ENCODE measurements at regions of chr19 and their contacts with region 1.

Region 1: GRCh38 chr19:4633140-4633967 is 6.0 kb upstream of the TNFAIP8L1 start:
- DNase-seq: peak; percentile 79
- H3K4me3 ChIP-seq: no peak overlapping the region
- H3K27ac ChIP-seq: peak overlapping the region; percentile 73
- H3K4me1 ChIP-seq: peaks cover 29% of the 10 kb centered on the region
- H3K27me3 ChIP-seq: no peaks in the 10 kb centered on the region
- CTCF ChIP-seq: peak; percentile 88 to 95
- POLR2A ChIP-seq: no peak

Region 2: DNA sequence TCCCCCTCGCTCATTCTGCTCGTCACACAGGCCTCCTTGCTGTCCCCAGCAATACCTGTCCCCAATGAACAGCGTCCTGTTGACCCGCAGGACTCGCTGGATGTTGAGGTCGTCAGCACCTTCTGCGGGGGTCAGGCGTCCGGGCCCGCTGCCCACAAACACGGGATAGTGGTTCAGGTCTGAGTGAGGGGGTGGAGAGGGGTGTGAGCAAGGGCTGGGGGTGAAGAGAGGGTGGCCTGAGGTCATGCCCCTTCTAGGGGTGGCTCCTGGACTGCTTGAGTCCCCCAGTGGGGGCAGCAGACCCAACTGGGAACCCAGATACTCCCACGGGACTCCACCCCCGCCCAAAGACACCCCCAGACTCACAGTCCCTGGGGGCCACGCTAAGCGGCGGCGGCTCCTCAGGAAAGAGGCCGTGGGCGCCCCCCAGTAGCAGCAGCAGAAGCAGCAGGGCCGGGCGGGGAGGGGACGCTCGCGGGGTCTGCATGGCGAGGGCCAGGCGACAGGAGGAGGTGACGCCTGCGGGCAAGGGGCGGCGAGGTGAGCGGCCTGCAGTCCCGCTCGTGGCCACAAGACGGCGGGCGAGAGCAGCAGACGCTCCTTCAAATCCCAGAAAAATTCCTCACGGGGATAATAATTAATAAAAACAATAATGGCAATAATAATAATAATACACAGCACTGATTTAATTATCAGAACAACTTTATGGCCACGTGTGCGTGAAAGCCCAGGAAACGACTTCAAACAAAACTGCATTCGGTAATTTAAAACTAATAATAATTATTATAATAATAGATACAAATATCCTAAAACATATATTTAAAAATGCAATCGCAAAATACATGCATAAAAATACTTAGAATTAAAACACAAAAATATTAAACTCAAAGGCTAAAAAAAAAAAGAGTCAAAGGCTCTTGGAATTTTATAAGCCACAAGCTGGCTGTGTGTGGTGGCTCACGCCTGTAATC is 75.1 kb before region 1 on chr19:
- CTCF ChIA-PET with region 1: interaction called, 42 read pairs
- POLR2A ChIA-PET with region 1: no interaction called
- dilution Hi-C with region 1: no loop called
- intact Hi-C with region 1: loop called (anchors 1 kb)
- DNase-seq: peak; percentile 61
- H3K4me3 ChIP-seq: peak overlapping the region in 2 of 3 experiments; percentile 37 to 76
- H3K27ac ChIP-seq: peak overlapping the region; percentile 77
- H3K4me1 ChIP-seq: peaks cover 26% of the 10 kb centered on the region
- H3K27me3 ChIP-seq: no peaks in the 10 kb centered on the region
- CTCF ChIP-seq: peak; percentile 91 to 93
- POLR2A ChIP-seq: no peak

Region 3: DNA sequence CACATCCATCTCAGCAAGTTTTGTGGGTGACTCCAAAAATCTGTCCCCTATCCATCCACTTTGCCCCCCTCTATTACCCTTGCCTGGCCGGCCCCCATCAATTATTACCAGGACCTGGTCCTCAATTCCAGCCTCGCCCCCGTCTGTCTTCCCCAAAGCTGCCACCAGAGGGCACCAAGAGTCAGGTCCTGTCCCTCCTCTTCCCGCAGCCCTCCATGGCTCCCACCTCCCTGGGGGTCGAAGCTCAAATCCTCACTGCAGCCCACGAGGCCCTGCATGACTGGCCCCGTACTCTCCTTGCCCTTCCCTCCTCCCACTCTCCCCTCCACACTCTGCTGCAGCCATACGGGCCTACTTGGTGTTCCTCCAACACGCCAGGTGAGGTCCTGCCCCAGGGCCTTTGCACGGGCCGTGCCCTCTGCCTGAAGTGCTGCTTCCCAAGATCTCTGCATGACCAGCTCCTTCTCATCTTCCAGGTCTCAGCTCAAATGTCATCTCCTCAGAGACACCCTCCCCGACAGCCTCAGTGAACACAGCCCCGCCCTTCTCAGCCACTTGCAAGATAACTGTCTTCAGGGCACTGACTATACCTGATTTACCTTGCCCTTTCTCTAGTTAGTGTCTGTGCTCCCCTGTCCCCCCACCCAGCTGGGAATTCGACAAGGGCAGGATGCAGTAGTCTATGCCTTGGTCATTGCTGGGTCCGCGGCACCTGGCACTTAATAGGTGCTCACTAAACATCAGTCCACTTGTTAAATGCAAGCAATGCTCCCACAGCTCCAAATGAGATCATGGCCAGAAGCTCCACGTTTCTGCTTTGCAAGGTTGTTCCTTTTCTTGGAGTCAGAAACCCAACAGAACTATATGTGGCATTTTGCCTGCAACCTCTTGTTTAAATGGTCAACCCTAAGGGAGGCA is 57.1 kb before region 1 on chr19:
- CTCF ChIA-PET with region 1: interaction called, 75 read pairs
- POLR2A ChIA-PET with region 1: interaction called, 5 read pairs
- dilution Hi-C with region 1: no loop called
- intact Hi-C with region 1: loop called (anchors 1 kb)
- DNase-seq: peak; percentile 72
- H3K4me3 ChIP-seq: no peak overlapping the region
- H3K27ac ChIP-seq: peak overlapping the region; percentile 99
- H3K4me1 ChIP-seq: peaks cover 24% of the 10 kb centered on the region
- H3K27me3 ChIP-seq: no peaks in the 10 kb centered on the region
- CTCF ChIP-seq: peak; percentile 82
- POLR2A ChIP-seq: no peak

Region 4: GRCh38 chr19:4597975-4598671 is 35.2 kb before region 1 on chr19:
- CTCF ChIA-PET with region 1: interaction called, 57 read pairs
- POLR2A ChIA-PET with region 1: no interaction called
- dilution Hi-C with region 1: no loop called
- intact Hi-C with region 1: no loop called
- DNase-seq: no peak
- H3K4me3 ChIP-seq: peak overlapping the region in 2 of 3 experiments; percentile 25 to 42
- H3K27ac ChIP-seq: no peak overlapping the region
- H3K4me1 ChIP-seq: no peaks in the 10 kb centered on the region
- H3K27me3 ChIP-seq: peaks cover 0 to 4% of the 10 kb centered on the region in 2 experiments
- CTCF ChIP-seq: no peak
- POLR2A ChIP-seq: no peak

Region 5: GRCh38 chr19:4831304-4831978 is 198.1 kb after region 1 on chr19 and contains the start of gene TICAM1:
- CTCF ChIA-PET with region 1: no interaction called
- POLR2A ChIA-PET with region 1: no interaction called
- dilution Hi-C with region 1: no loop called
- intact Hi-C with region 1: no loop called
- DNase-seq: peak; percentile 66
- H3K4me3 ChIP-seq: peak within 1 kb of the TSS; percentile 97 to 100 (median 98)
- H3K27ac ChIP-seq: peak within 1 kb of the TSS; percentile 90
- H3K4me1 ChIP-seq: peaks cover 8% of the 10 kb centered on the region
- H3K27me3 ChIP-seq: no peaks in the 10 kb centered on the region
- CTCF ChIP-seq: no peak
- POLR2A ChIP-seq: peak; percentile 83
- total RNA-seq, gene TICAM1: 17.6 and 19.0 TPM in 2 replicates